H1 (cell line): ENCODE measurements at regions of chr12 and their contacts with region 1.

Region 1: DNA sequence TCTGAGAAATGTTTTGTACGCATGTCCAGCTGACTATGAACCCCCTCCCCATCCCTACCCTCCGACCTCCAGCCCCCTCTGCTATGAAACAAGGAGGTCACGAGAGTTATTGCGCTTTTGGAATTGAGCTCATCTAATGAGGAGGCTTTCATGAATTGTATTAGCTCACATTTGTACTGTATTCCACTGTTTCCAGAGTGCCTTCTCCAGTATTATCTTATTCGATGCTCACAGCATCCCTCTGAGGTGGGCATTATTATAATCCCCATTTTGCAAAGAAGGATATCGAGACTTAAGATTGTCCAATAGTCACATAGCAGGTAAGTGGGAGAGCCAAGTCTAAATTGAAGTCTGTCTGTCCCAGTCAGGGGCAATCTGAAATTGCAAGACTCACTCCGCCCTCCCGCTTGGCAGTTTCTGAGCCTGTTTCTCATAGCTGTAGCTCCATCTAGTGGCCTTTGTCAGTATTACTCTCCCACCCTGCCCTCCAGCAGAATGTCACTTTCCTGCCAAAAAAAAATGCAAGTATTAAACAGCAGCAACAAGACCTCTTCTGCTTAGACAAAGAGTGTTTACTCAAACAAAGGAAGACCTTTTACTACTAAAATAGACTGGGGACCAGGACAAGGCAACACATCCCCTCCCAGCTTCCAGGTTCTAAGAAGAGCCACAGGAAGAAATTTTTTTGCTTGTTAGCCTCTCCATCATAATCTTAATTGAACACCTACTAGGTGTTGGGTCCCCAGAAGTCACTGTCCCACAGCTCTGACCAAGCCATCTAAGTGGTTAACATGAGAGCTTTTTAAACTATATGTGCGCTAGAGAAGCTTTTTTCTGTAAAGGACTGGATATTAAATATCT is 48.6 kb upstream of the TMEM233 start:
- DNase-seq: peak; percentile 13 to 81
- H3K4me3 ChIP-seq: no peak overlapping the region
- H3K27ac ChIP-seq: no peak overlapping the region
- H3K4me1 ChIP-seq: no peaks in the 10 kb centered on the region
- H3K27me3 ChIP-seq: no peaks in the 10 kb centered on the region
- CTCF ChIP-seq: peak; percentile 49 to 93 (median 85)
- EP300 ChIP-seq: no peak
- POLR2A ChIP-seq: no peak
- RAD21 ChIP-seq: peak; percentile 96 to 98

Region 2: DNA sequence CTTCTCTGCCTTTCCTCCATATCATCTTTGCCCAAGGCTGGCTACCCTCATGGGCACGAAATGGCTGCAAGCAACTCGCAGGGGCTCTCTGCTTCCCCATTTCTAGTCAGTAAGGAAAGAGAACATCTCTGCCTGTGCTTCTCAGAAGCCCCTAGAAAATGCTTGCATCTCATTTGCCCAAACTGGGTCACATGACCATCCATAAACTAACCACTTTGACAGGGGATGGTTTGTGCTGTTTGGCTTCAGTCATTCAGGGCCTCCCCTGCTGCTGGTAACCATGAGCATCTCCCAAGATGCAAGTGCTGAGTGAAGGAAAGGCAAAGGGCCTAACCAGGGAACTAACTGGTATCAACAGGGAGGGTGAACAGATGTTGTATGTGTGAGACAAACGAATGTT is 119.4 kb before region 1 on chr12:
- CTCF ChIA-PET with region 1: no interaction called
- POLR2A ChIA-PET with region 1: no interaction called
- DNase-seq: no peak
- H3K4me3 ChIP-seq: no peak overlapping the region
- H3K27ac ChIP-seq: no peak overlapping the region
- H3K4me1 ChIP-seq: no peaks in the 10 kb centered on the region
- H3K27me3 ChIP-seq: no peaks in the 10 kb centered on the region
- CTCF ChIP-seq: no peak
- EP300 ChIP-seq: no peak
- POLR2A ChIP-seq: no peak
- RAD21 ChIP-seq: no peak

Region 3: GRCh38 chr12:119500209-119500608 is 44.8 kb before region 1 on chr12:
- CTCF ChIA-PET with region 1: interaction called, 14 read pairs
- POLR2A ChIA-PET with region 1: no interaction called
- DNase-seq: no peak
- H3K4me3 ChIP-seq: no peak overlapping the region
- H3K27ac ChIP-seq: no peak overlapping the region
- H3K4me1 ChIP-seq: peaks cover 5 to 11% (median 5%) of the 10 kb centered on the region in 4 experiments; a peak in 5 of 7 replicates
- H3K27me3 ChIP-seq: no peaks in the 10 kb centered on the region; a peak in 1 of 7 replicates
- CTCF ChIP-seq: peak in 2 of 3 experiments; percentile 27 to 34; a peak in 2 of 4 replicates
- EP300 ChIP-seq: no peak
- POLR2A ChIP-seq: no peak
- RAD21 ChIP-seq: peak; percentile 37 to 54; a peak in 3 of 4 replicates

Region 4: GRCh38 chr12:119556854-119557253 is 11.9 kb after region 1 on chr12:
- CTCF ChIA-PET with region 1: interaction called, 10 read pairs
- POLR2A ChIA-PET with region 1: interaction called, 5 read pairs
- DNase-seq: no peak
- H3K4me3 ChIP-seq: no peak overlapping the region
- H3K27ac ChIP-seq: no peak overlapping the region
- H3K4me1 ChIP-seq: no peaks in the 10 kb centered on the region
- H3K27me3 ChIP-seq: no peaks in the 10 kb centered on the region
- CTCF ChIP-seq: no peak
- EP300 ChIP-seq: no peak
- POLR2A ChIP-seq: no peak
- RAD21 ChIP-seq: no peak